Activated CD8-positive, alpha-beta T cell treated with anti-CD3 and anti-CD28 coated beads for 36 hours (primary cell): ENCODE measurements at regions of chr12 and their contacts with region 1.

Region 1: DNA sequence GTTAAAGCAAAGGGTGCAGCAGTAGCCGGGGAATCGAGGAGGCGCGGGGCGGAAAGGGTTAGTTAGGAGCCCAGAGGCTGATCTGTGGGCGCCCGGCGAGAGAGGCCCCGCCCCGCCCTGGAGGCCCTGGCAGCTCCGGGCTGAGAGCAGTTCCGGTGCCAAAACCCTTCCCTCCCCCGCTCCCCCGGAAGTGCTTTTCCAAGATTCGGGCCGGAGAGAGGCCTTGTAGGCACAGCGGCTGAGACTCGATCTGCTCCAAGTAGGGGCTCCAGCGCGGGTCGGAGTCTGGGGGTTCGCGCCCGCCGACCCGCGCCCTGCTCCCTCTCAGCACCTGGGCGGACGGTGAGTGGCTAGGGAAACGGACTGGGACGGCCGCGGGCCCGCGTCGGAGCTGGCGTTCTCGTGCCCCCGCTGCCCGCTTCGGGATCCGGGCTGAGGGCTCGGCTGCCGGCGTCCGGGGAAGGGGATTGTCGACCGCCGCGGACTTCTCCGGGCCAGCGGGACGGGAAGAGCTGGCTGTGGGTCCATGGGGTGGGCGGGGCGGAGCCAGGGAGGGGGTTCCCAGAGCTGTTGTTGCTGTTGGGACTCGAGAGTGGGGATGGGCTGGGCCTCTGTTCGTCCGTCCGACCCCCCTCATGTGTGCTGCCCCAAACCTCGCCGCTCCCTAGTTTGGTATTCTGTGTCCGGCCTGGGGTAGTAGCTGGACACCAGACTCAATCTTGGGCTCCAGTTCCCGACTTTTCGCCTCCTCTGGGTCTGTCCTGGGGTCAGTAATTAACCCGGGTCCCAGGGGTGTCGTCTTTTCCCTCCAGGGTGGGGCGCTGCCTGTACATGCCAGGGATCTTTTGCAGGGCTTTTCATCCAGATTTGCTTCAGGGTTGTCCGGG is at the start of gene FRS2:
- DNase-seq: peak; percentile 93
- ATAC-seq: peak; percentile 99
- H3K4me3 Mint-ChIP-seq: peak within 1 kb of the TSS; percentile 96
- H3K27ac Mint-ChIP-seq: peak within 1 kb of the TSS; percentile 98
- H3K4me1 Mint-ChIP-seq: peaks cover 38% of the 10 kb centered on the region
- H3K27me3 Mint-ChIP-seq: no peaks in the 10 kb centered on the region
- CTCF ChIP-seq: no peak
- total RNA-seq, gene FRS2: 8.3 to 10.5 TPM

Region 2: GRCh38 chr12:69425412-69425811 is 45.0 kb before region 1 on chr12:
- CTCF ChIA-PET with region 1: no interaction called
- POLR2A ChIA-PET with region 1: no interaction called
- intact Hi-C with region 1: no loop called
- DNase-seq: peak; percentile 3
- ATAC-seq: no peak
- H3K4me3 Mint-ChIP-seq: no peak overlapping the region
- H3K27ac Mint-ChIP-seq: no peak overlapping the region
- H3K4me1 Mint-ChIP-seq: no peaks in the 10 kb centered on the region
- H3K27me3 Mint-ChIP-seq: no peaks in the 10 kb centered on the region
- CTCF ChIP-seq: no peak

Region 3: GRCh38 chr12:69484428-69484827 is 14.0 kb after region 1 on chr12:
- CTCF ChIA-PET with region 1: interaction called, 3 read pairs
- POLR2A ChIA-PET with region 1: interaction called, 10 read pairs
- intact Hi-C with region 1: no loop called
- DNase-seq: no peak
- ATAC-seq: no peak
- H3K4me3 Mint-ChIP-seq: no peak overlapping the region
- H3K27ac Mint-ChIP-seq: no peak overlapping the region
- H3K4me1 Mint-ChIP-seq: peaks cover 38% of the 10 kb centered on the region
- H3K27me3 Mint-ChIP-seq: no peaks in the 10 kb centered on the region
- CTCF ChIP-seq: no peak